A549 (cell line): ENCODE measurements at regions of chr17 and their contacts with region 1.

Region 1: GRCh38 chr17:77214743-77215142 is 74.0 kb downstream of the SEC14L1 start:
- DNase-seq: peak; percentile 73 to 79
- ATAC-seq: peak; percentile 86 to 94
- H3K4me3 ChIP-seq: no peak overlapping the region
- H3K27ac ChIP-seq: no peak overlapping the region
- H3K4me1 ChIP-seq: no peaks in the 10 kb centered on the region
- CTCF ChIP-seq: peak; percentile 69
- EP300 ChIP-seq: no peak
- POLR2A ChIP-seq: no peak
- RAD21 ChIP-seq: peak; percentile 63 to 81

Region 2: GRCh38 chr17:77127735-77128361 is 86.9 kb before region 1 on chr17:
- CTCF ChIA-PET with region 1: interaction called, 14 read pairs
- POLR2A ChIA-PET with region 1: no interaction called
- DNase-seq: no peak
- ATAC-seq: no peak
- H3K4me3 ChIP-seq: no peak overlapping the region
- H3K27ac ChIP-seq: peak overlapping the region; percentile 3 to 36; a peak in 4 of 6 replicates
- H3K4me1 ChIP-seq: peaks cover 66% of the 10 kb centered on the region
- CTCF ChIP-seq: no peak
- EP300 ChIP-seq: no peak
- POLR2A ChIP-seq: no peak
- RAD21 ChIP-seq: no peak

Region 3: DNA sequence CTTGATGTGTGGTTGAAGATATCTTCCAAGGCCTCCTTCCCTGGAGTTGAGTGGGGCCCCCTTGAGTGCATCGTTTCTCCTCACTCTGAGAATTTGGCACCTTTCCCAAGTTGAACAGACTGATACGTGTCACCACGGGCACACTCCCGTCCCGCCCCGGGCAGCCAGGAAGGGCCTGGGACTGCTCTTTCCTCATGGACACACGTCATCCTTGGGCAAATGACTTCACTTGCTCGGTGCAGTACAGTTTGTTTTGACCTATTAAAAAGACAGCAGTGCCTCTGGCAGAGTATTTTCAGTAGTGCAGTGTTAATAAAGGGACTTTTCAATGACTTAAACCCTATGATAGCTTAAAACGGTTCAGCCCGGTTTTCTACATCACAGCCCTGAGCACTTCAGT is 14.0 kb before region 1 on chr17:
- CTCF ChIA-PET with region 1: interaction called, 38 read pairs
- POLR2A ChIA-PET with region 1: no interaction called
- DNase-seq: peak in 1 of 2 experiments; percentile 29
- ATAC-seq: no peak; a peak in 1 of 6 replicates
- H3K4me3 ChIP-seq: no peak overlapping the region
- H3K27ac ChIP-seq: no peak overlapping the region
- H3K4me1 ChIP-seq: no peaks in the 10 kb centered on the region
- CTCF ChIP-seq: no peak
- EP300 ChIP-seq: no peak
- POLR2A ChIP-seq: no peak
- RAD21 ChIP-seq: no peak

Region 4: DNA sequence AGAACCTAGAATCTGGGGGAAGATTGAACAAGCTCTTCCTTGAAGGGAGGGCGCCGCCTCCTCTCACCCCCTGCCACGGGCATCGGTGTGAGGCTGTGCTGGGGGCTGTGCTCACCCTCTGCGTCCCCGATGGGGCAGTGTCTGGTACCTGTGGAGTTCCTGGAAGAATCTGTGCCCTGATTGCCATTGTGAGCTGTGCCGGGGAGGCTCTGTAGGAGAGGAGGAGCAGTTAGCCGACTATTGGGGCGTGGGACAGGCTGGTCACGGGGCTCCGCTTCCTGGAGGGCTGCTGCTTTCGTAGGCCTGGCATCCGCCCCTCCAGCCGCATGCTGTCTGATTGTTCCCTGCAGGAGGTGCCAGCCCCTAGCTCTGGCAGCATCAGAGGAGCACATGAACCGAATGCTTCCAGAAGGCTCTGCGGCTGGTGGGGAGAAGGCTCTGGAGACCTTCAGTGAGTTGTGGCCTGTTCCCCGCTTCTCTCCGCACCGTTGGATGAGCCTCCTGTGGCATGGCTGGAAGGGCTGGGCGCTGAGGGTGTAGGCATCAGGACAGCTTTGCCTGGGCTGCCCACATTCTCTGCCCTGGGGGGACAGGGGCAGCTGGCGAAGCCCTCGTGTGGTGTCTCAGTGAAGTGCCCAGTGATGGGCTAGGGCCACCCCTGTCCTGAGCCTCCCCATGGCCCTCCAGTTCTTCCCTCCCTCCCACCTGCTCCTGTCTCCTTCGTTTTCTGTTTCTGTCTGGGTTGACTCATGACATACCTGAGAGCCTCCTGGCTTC is 12.9 kb after region 1 on chr17:
- CTCF ChIA-PET with region 1: interaction called, 22 read pairs
- POLR2A ChIA-PET with region 1: no interaction called
- DNase-seq: no peak
- ATAC-seq: peak; percentile 54 to 58
- H3K4me3 ChIP-seq: no peak overlapping the region
- H3K27ac ChIP-seq: peak overlapping the region in 1 of 2 experiments; percentile 19; a peak in 2 of 6 replicates
- H3K4me1 ChIP-seq: no peaks in the 10 kb centered on the region
- CTCF ChIP-seq: no peak
- EP300 ChIP-seq: no peak
- POLR2A ChIP-seq: no peak
- RAD21 ChIP-seq: no peak